Endothelial cell of umbilical vein (primary cell): ENCODE measurements at regions of chr2 and their contacts with region 1.

Region 1: GRCh38 chr2:106582148-106583143 is 95.3 kb downstream of the CD8B2 start:
- DNase-seq: peak; percentile 74
- H3K4me3 ChIP-seq: peak overlapping the region in 1 of 3 experiments; percentile 44
- H3K27ac ChIP-seq: no peak overlapping the region
- H3K4me1 ChIP-seq: no peaks in the 10 kb centered on the region
- H3K27me3 ChIP-seq: no peaks in the 10 kb centered on the region
- CTCF ChIP-seq: peak; percentile 88
- POLR2A ChIP-seq: no peak

Region 2: GRCh38 chr2:106104332-106105062 is 477.9 kb before region 1 on chr2:
- CTCF ChIA-PET with region 1: interaction called, 11 read pairs
- POLR2A ChIA-PET with region 1: no interaction called
- dilution Hi-C with region 1: no loop called
- intact Hi-C with region 1: loop called (anchors 1 kb)
- DNase-seq: peak; percentile 63
- H3K4me3 ChIP-seq: no peak overlapping the region
- H3K27ac ChIP-seq: no peak overlapping the region
- H3K4me1 ChIP-seq: no peaks in the 10 kb centered on the region
- H3K27me3 ChIP-seq: no peaks in the 10 kb centered on the region
- CTCF ChIP-seq: peak; percentile 78 to 91
- POLR2A ChIP-seq: no peak

Region 3: DNA sequence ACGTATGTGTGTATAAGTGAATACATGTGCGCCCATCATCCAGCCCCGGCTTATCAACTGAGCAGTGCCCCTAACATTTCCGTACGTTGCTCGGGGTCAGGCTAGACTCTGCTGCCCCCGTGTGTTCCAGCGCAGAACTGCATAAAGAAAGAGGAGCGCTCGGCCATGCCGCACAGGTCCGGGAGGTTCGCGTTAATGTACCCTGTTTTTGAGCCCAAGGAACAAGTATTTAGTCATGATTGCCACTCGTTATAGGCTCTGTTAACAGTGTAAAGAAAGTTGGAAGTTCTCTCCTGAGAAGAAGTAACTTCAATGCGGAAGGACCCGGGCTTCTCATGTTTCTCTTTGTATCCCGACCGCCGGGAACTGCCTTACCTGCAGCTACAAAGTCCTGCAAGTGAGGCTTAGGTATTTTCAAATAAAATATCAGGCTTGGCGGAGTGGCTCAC is 39.6 kb before region 1 on chr2:
- CTCF ChIA-PET with region 1: interaction called, 3 read pairs
- POLR2A ChIA-PET with region 1: no interaction called
- dilution Hi-C with region 1: no loop called
- intact Hi-C with region 1: loop called (anchors 1 kb)
- DNase-seq: peak; percentile 62
- H3K4me3 ChIP-seq: no peak overlapping the region
- H3K27ac ChIP-seq: no peak overlapping the region
- H3K4me1 ChIP-seq: no peaks in the 10 kb centered on the region
- H3K27me3 ChIP-seq: no peaks in the 10 kb centered on the region
- CTCF ChIP-seq: peak; percentile 71 to 85
- POLR2A ChIP-seq: no peak

Region 4: GRCh38 chr2:106562268-106563186 is 19.9 kb before region 1 on chr2:
- CTCF ChIA-PET with region 1: interaction called, 10 read pairs
- POLR2A ChIA-PET with region 1: no interaction called
- dilution Hi-C with region 1: no loop called
- intact Hi-C with region 1: no loop called
- DNase-seq: no peak
- H3K4me3 ChIP-seq: no peak overlapping the region
- H3K27ac ChIP-seq: no peak overlapping the region
- H3K4me1 ChIP-seq: no peaks in the 10 kb centered on the region
- H3K27me3 ChIP-seq: no peaks in the 10 kb centered on the region
- CTCF ChIP-seq: no peak
- POLR2A ChIP-seq: no peak